ENCODE measurements at regions of chr3 and their contacts with region 1.

Region 1: GRCh38 chr3:193572426-193572908 is 17.8 kb upstream of the ATP13A4 start:
- DNase-seq: peak; percentile 46
- H3K4me3 ChIP-seq: no peak overlapping the region
- H3K27ac ChIP-seq: no peak overlapping the region
- H3K4me1 ChIP-seq: no peaks in the 10 kb centered on the region
- H3K27me3 ChIP-seq: no peaks in the 10 kb centered on the region
- CTCF ChIP-seq: peak; percentile 83 to 86

Region 2: DNA sequence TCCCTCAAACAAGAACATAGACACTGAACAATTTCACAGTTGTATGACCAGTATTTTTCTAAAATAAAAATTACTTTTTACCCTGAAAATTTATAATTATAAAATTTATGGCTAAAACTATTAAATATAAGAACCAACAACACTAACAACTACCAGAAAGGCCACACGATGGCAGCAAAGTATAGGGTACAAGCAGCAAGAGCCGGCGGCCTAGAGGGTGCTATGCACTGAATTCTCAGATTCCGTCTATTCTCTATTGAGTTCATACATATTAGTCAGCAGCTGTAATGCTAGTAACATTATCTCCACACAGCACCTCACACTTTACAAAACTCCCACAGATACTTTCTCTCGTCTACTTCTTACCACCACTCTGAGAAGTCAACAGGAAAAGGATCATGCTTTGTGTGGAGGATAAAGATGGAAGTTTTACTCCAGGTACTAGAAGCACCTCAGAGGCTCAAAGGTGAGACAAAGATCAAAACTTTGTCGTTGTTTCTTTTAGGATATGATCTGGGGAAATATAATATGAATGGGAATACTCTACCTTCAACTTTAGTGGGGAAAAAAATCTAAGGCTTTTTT is 1005.7 kb before region 1 on chr3:
- CTCF ChIA-PET with region 1: no interaction called
- dilution Hi-C with region 1: no loop called
- in situ Hi-C with region 1: loop called in 1 of 2 experiments (anchors 25 kb)
- intact Hi-C with region 1: loop called (anchors 1 kb)
- DNase-seq: peak; percentile 50
- H3K4me3 ChIP-seq: no peak overlapping the region
- H3K27ac ChIP-seq: no peak overlapping the region
- H3K4me1 ChIP-seq: no peaks in the 10 kb centered on the region
- H3K27me3 ChIP-seq: no peaks in the 10 kb centered on the region
- CTCF ChIP-seq: peak; percentile 51 to 72

Region 3: DNA sequence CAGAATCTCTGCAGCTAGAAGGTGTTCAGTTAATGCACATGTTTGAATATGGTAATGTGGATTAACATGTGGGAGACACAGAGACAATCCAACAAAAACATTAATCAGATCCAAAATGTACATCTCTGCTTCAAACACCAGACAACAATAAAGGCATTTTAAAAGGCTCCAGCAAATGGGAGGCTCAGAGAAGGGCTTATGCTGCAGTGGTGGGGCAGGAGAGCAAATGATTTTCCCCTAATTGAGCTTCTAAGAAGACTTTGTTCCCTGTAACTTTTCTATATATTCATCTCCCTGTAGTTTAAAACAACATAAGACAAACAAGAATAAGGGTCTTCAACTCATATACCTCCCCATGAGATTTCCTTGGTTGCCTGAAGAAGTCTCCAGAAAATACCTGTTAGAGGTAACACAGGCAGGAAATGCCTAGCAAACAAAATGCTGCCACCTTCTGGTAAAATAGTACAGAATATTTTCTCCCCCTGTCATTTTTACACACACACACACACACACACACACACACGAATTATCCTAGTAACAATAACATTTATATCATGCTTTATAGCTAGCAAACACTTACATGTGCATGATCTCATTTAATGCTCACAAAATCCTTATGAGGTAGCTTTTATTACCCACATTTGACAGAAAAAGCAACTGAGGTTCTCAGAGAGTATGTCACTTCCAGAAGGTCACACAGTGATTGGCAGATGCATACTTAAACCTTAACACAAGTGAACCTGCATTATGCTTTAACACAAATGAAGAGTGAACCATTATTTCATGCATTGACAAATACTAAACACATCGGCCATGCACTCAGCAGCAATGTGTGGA is 531.4 kb before region 1 on chr3:
- CTCF ChIA-PET with region 1: no interaction called
- dilution Hi-C with region 1: no loop called
- in situ Hi-C with region 1: loop called in 1 of 2 experiments (anchors 25 kb)
- intact Hi-C with region 1: loop called (anchors 5 kb)
- DNase-seq: peak; percentile 56
- H3K4me3 ChIP-seq: no peak overlapping the region
- H3K27ac ChIP-seq: no peak overlapping the region
- H3K4me1 ChIP-seq: no peaks in the 10 kb centered on the region
- H3K27me3 ChIP-seq: no peaks in the 10 kb centered on the region
- CTCF ChIP-seq: peak; percentile 41 to 61

Region 4: GRCh38 chr3:193457526-193457925 is 114.9 kb before region 1 on chr3:
- CTCF ChIA-PET with region 1: no interaction called
- dilution Hi-C with region 1: loop called (anchors 5 kb)
- in situ Hi-C with region 1: loop called (anchors 5 to 10 kb)
- intact Hi-C with region 1: loop called (anchors 1 kb)
- DNase-seq: no peak
- H3K4me3 ChIP-seq: no peak overlapping the region
- H3K27ac ChIP-seq: no peak overlapping the region
- H3K4me1 ChIP-seq: no peaks in the 10 kb centered on the region
- H3K27me3 ChIP-seq: peaks cover 2% of the 10 kb centered on the region
- CTCF ChIP-seq: no peak